A549 (cell line): ENCODE measurements at regions of chr17 and their contacts with region 1.

Region 1: GRCh38 chr17:17928398-17929287 is 43.6 kb downstream of the TOM1L2 start:
- DNase-seq: no peak
- ATAC-seq: peak in 1 of 2 experiments; percentile 31; a peak in 1 of 6 replicates
- H3K4me3 ChIP-seq: no peak overlapping the region
- H3K27ac ChIP-seq: no peak overlapping the region
- H3K4me1 ChIP-seq: peaks cover 11% of the 10 kb centered on the region; the same call in 2 of the 3 replicates
- CTCF ChIP-seq: no peak
- EP300 ChIP-seq: no peak
- POLR2A ChIP-seq: no peak
- RAD21 ChIP-seq: no peak

Region 2: GRCh38 chr17:17943281-17943984 is 14.8 kb after region 1 on chr17:
- CTCF ChIA-PET with region 1: interaction called, 11 read pairs
- POLR2A ChIA-PET with region 1: no interaction called
- DNase-seq: no peak
- ATAC-seq: peak; percentile 40 to 52; a peak in 4 of 6 replicates
- H3K4me3 ChIP-seq: no peak overlapping the region
- H3K27ac ChIP-seq: peak overlapping the region; percentile 32 to 50; a peak in 4 of 6 replicates
- H3K4me1 ChIP-seq: peaks cover 61% of the 10 kb centered on the region
- CTCF ChIP-seq: no peak
- EP300 ChIP-seq: no peak
- POLR2A ChIP-seq: no peak
- RAD21 ChIP-seq: no peak

Region 3: GRCh38 chr17:18045691-18046090 is 117.0 kb after region 1 on chr17:
- CTCF ChIA-PET with region 1: no interaction called
- POLR2A ChIA-PET with region 1: no interaction called
- DNase-seq: no peak
- ATAC-seq: no peak
- H3K4me3 ChIP-seq: no peak overlapping the region
- H3K27ac ChIP-seq: no peak overlapping the region
- H3K4me1 ChIP-seq: peaks cover 16% of the 10 kb centered on the region
- CTCF ChIP-seq: no peak
- EP300 ChIP-seq: no peak
- POLR2A ChIP-seq: no peak
- RAD21 ChIP-seq: no peak